MCF 10A (cell line): ENCODE measurements at regions of chr6 and their contacts with region 1.

Region 1: GRCh38 chr6:166627033-166627874 is at the start of gene RPS6KA2:
- DNase-seq: peak; percentile 99
- H3K4me3 Mint-ChIP-seq: peak within 1 kb of the TSS; percentile 88
- H3K27ac Mint-ChIP-seq: peak within 1 kb of the TSS; percentile 66
- H3K4me1 Mint-ChIP-seq: peaks cover 24% of the 10 kb centered on the region
- H3K27me3 Mint-ChIP-seq: no peaks in the 10 kb centered on the region
- CTCF ChIP-seq: no peak
- total RNA-seq, gene RPS6KA2: 126 and 157 TPM in 2 replicates

Region 2: GRCh38 chr6:166515072-166515810 is 112.0 kb before region 1 on chr6:
- CTCF ChIA-PET with region 1: interaction called, 4 read pairs
- POLR2A ChIA-PET with region 1: interaction called, 8 read pairs
- intact Hi-C with region 1: loop called (anchors 1 kb)
- DNase-seq: peak; percentile 83
- H3K4me3 Mint-ChIP-seq: no peak overlapping the region
- H3K27ac Mint-ChIP-seq: no peak overlapping the region
- H3K4me1 Mint-ChIP-seq: peaks cover 20% of the 10 kb centered on the region
- H3K27me3 Mint-ChIP-seq: no peaks in the 10 kb centered on the region
- CTCF ChIP-seq: peak; percentile 54

Region 3: GRCh38 chr6:166556871-166557322 is 70.4 kb before region 1 on chr6:
- CTCF ChIA-PET with region 1: interaction called, 4 read pairs
- POLR2A ChIA-PET with region 1: interaction called, 86 read pairs
- intact Hi-C with region 1: loop called (anchors 1 kb)
- DNase-seq: peak; percentile 99
- H3K4me3 Mint-ChIP-seq: peak overlapping the region; percentile 68
- H3K27ac Mint-ChIP-seq: peak overlapping the region; percentile 86
- H3K4me1 Mint-ChIP-seq: peaks cover 64% of the 10 kb centered on the region
- H3K27me3 Mint-ChIP-seq: no peaks in the 10 kb centered on the region
- CTCF ChIP-seq: no peak

Region 4: GRCh38 chr6:166592821-166593220 is 34.4 kb before region 1 on chr6:
- CTCF ChIA-PET with region 1: interaction called, 4 read pairs
- POLR2A ChIA-PET with region 1: interaction called, 89 read pairs
- intact Hi-C with region 1: loop called (anchors 2 kb)
- DNase-seq: peak; percentile 76
- H3K4me3 Mint-ChIP-seq: peak overlapping the region; percentile 22
- H3K27ac Mint-ChIP-seq: peak overlapping the region; percentile 86
- H3K4me1 Mint-ChIP-seq: peaks cover 58% of the 10 kb centered on the region
- H3K27me3 Mint-ChIP-seq: no peaks in the 10 kb centered on the region
- CTCF ChIP-seq: no peak

Region 5: DNA sequence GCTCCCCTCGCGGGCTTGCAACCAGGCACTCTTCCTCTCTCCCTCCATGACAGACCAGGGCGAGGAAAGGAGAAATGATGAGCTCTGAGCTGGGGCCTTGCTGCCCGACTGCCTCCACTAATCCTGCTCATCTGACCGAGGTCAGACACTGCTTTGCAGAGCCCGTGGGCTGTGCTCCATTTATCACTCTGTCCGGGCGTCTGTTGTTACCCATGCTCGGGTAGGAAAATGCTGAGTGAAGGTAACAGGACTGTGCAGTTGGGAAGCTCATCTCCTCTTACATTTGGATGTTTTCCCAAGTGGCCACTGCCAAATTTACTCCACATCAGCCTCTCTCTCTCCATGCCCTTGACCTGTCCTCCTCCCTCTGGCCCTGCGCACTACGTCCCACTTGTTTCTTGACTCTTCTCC is 14.8 kb before region 1 on chr6:
- CTCF ChIA-PET with region 1: interaction called, 3 read pairs
- POLR2A ChIA-PET with region 1: interaction called, 17 read pairs
- intact Hi-C with region 1: no loop called
- DNase-seq: no peak
- H3K4me3 Mint-ChIP-seq: no peak overlapping the region
- H3K27ac Mint-ChIP-seq: peak overlapping the region; percentile 86
- H3K4me1 Mint-ChIP-seq: peaks cover 55% of the 10 kb centered on the region
- H3K27me3 Mint-ChIP-seq: no peaks in the 10 kb centered on the region
- CTCF ChIP-seq: no peak

Region 6: DNA sequence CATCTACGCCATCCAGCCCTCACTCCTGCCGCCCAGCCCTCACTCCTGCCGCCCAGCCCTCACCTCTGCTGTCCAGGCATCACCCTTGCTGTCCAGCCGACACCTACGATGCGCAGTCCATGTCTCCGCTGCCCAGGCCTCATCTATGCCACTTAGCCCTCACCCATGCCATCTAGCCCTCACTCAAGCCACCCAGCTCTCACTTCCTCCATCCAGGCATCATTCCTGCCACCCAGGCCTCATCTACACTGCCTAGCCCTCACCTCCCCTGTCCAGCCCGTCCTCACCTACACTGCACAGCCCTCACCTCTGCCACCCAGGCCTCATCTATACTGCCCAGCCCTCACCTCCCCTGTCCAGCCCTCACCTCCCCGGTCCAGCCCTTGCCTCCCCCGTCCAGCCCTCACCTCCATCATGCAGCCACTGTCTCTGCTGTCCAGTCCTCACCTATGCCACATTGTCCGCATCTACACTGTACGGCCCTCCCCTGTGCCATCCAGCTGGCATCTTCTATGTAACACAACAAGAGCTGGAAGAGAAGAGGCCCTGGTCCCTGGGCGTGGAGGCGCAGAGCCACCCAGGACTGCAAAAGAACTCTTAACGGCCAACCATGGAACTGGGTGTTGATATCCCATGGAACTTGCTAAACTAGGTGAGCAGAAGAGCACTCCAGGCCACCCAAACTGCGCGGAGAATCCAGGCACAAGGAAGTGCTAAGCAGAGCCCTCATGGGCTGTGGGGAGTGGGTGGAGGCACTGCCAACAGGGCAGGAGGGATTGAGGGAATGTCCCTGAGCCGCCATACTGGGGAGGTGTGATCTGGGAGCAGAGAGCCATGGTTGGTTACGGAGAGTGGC is 298.1 kb after region 1 on chr6:
- CTCF ChIA-PET with region 1: no interaction called
- POLR2A ChIA-PET with region 1: no interaction called
- intact Hi-C with region 1: no loop called
- DNase-seq: no peak
- H3K4me3 Mint-ChIP-seq: no peak overlapping the region
- H3K27ac Mint-ChIP-seq: no peak overlapping the region
- H3K4me1 Mint-ChIP-seq: no peaks in the 10 kb centered on the region
- H3K27me3 Mint-ChIP-seq: no peaks in the 10 kb centered on the region
- CTCF ChIP-seq: no peak